ENCODE measurements at regions of chr10 and their contacts with region 1.

Region 1: DNA sequence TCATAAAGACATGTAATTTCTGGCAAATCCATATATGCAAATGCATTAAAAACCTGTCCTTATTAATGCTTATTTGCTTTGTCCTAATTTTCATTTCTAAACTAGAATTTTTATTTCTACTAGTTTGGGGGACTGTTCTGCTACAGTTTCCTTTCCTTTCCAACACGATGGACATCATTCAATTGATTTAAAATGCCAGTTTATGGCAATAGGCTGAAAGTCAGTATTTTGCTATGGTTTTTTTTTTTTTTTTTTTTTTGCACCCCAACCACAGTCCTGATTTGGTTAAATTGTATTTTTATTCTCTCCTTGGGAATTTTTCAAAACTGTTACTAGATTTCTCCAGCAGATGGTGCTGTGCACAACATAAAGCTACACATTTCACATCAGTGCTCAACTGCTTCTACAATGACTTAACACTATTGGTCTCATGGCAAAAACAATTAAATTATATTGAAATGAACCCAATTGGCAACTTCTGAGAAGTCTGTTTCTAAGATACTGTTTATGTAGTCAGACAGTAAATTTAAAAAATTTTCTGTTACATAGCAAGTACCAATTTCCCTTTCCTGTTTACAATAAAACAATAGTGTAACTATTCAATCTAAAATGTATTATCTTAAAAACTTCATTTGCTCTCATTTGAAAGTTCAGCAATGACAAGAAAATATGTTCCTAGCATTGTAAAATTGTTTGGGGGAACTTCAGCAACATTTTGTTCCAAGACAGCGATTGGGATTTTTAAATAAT is 193.8 kb upstream of the CCDC6 start:
- DNase-seq: peak in 1 of 2 experiments; percentile 73
- H3K4me3 ChIP-seq: no peak overlapping the region
- H3K4me3 Mint-ChIP-seq: no peak overlapping the region
- H3K27ac Mint-ChIP-seq: no peak overlapping the region
- H3K4me1 ChIP-seq: peaks cover 7% of the 10 kb centered on the region; the same call in 1 of the 2 replicates
- H3K4me1 Mint-ChIP-seq: peaks cover 10% of the 10 kb centered on the region
- H3K27me3 ChIP-seq: no peaks in the 10 kb centered on the region
- H3K27me3 Mint-ChIP-seq: no peaks in the 10 kb centered on the region
- CTCF ChIP-seq: peak; percentile 78 to 81

Region 2: GRCh38 chr10:59337201-59337652 is 762.9 kb before region 1 on chr10:
- CTCF ChIA-PET with region 1: interaction called, 11 read pairs
- POLR2A ChIA-PET with region 1: no interaction called
- intact Hi-C with region 1: no loop called
- DNase-seq: no peak
- H3K4me3 ChIP-seq: no peak overlapping the region
- H3K4me3 Mint-ChIP-seq: no peak overlapping the region
- H3K27ac Mint-ChIP-seq: no peak overlapping the region
- H3K4me1 ChIP-seq: no peaks in the 10 kb centered on the region
- H3K4me1 Mint-ChIP-seq: no peaks in the 10 kb centered on the region
- H3K27me3 ChIP-seq: peaks cover 1% of the 10 kb centered on the region
- H3K27me3 Mint-ChIP-seq: peaks cover 20% of the 10 kb centered on the region
- CTCF ChIP-seq: no peak

Region 3: DNA sequence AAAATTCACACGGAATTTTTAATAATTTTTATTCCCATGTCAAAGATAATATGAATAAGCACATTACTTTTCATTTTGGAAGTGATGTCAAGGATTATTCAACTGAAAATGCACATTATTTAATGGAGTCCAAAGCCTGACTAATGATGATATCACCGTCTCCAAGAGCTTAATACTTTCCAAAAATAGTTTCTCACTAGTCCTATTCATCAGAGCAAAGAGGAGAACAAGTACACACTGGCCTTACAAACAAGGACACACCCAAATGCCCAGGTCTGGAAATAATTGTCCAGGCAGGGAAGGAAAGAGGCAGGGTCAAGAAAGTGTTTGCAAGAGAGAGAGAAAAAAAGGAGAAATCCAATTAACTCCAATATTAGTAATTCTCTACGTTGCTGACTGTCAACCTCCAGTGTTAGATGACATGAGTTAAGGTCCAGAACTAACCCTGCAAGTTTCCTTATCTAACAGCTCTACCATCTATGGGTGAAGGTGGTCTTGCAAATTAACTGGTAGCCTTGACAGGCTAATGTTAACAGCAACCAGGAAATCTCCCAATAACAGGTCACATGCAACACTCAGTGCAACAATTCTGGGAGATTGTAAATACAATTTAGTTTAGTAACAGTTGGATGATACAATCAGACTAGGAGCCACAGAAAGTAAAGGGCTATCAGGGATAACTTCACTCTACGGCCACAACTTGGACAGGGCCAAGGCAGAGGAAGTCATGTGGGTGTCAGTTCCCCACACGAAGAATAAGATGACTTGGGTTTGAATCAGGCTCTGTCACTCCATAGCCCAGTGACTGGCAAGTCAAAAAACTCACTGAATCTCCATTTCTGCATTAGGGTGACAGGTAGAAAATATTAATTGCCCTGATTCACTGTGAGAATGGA is 23.2 kb after region 1 on chr10:
- CTCF ChIA-PET with region 1: interaction called, 11 read pairs
- POLR2A ChIA-PET with region 1: no interaction called
- intact Hi-C with region 1: no loop called
- DNase-seq: no peak
- H3K4me3 ChIP-seq: no peak overlapping the region
- H3K4me3 Mint-ChIP-seq: no peak overlapping the region
- H3K27ac Mint-ChIP-seq: peak overlapping the region; percentile 50
- H3K4me1 ChIP-seq: peaks cover 15% of the 10 kb centered on the region
- H3K4me1 Mint-ChIP-seq: peaks cover 18% of the 10 kb centered on the region
- H3K27me3 ChIP-seq: no peaks in the 10 kb centered on the region
- H3K27me3 Mint-ChIP-seq: no peaks in the 10 kb centered on the region
- CTCF ChIP-seq: no peak

Region 4: GRCh38 chr10:60162631-60163030 is 62.5 kb after region 1 on chr10:
- CTCF ChIA-PET with region 1: no interaction called
- POLR2A ChIA-PET with region 1: no interaction called
- intact Hi-C with region 1: no loop called
- DNase-seq: no peak
- H3K4me3 ChIP-seq: no peak overlapping the region
- H3K4me3 Mint-ChIP-seq: no peak overlapping the region
- H3K27ac Mint-ChIP-seq: no peak overlapping the region
- H3K4me1 ChIP-seq: no peaks in the 10 kb centered on the region
- H3K4me1 Mint-ChIP-seq: no peaks in the 10 kb centered on the region
- H3K27me3 ChIP-seq: no peaks in the 10 kb centered on the region
- H3K27me3 Mint-ChIP-seq: peaks cover 3% of the 10 kb centered on the region
- CTCF ChIP-seq: no peak

Region 5: GRCh38 chr10:60175441-60175971 is 75.3 kb after region 1 on chr10:
- CTCF ChIA-PET with region 1: interaction called, 11 read pairs
- POLR2A ChIA-PET with region 1: no interaction called
- intact Hi-C with region 1: no loop called
- DNase-seq: peak; percentile 69 to 82
- H3K4me3 ChIP-seq: no peak overlapping the region
- H3K4me3 Mint-ChIP-seq: peak overlapping the region; percentile 2
- H3K27ac Mint-ChIP-seq: peak overlapping the region; percentile 54
- H3K4me1 ChIP-seq: peaks cover 65% of the 10 kb centered on the region
- H3K4me1 Mint-ChIP-seq: peaks cover 51% of the 10 kb centered on the region
- H3K27me3 ChIP-seq: no peaks in the 10 kb centered on the region
- H3K27me3 Mint-ChIP-seq: no peaks in the 10 kb centered on the region
- CTCF ChIP-seq: no peak

Region 6: DNA sequence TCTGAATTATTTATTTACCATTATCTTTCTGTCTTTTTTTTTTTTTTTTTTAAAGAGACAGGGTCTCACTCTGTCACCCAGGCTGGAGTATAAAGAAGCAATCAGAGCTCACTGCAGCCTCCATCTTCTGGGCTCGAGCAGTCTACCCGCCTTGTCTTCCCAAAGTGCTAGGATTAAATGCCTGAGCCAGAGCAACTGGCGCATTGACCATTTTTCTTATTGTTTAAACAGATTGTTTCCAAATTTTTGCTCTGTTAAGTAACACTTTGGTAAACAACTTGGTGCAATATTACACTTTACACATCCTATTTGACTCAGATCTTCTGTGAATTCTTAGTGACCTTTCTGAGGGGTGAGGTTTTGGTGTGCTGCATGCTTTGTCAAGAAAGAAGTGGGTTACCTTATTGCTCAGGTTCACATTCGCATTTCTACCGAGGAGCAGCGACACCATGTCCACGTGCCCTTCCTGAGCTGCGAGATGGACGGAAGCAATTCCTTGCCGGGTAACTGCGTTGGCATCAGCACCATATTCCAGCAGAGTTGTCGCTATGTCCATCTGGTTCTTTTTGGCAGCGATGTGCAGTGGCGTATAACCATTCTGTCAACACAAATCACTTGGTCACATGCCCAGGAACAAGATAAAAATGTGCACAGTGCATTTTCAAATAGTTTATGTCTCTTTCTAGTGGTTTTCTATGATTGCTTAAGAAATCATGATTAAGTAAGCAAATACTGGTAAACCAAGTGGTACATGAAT is 86.3 kb after region 1 on chr10:
- CTCF ChIA-PET with region 1: no interaction called
- POLR2A ChIA-PET with region 1: no interaction called
- intact Hi-C with region 1: no loop called
- DNase-seq: no peak
- H3K4me3 ChIP-seq: no peak overlapping the region
- H3K4me3 Mint-ChIP-seq: no peak overlapping the region
- H3K27ac Mint-ChIP-seq: no peak overlapping the region
- H3K4me1 ChIP-seq: no peaks in the 10 kb centered on the region
- H3K4me1 Mint-ChIP-seq: peaks cover 7% of the 10 kb centered on the region
- H3K27me3 ChIP-seq: no peaks in the 10 kb centered on the region
- H3K27me3 Mint-ChIP-seq: no peaks in the 10 kb centered on the region
- CTCF ChIP-seq: no peak

Region 7: GRCh38 chr10:60335708-60336107 is 235.5 kb after region 1 on chr10:
- CTCF ChIA-PET with region 1: interaction called, 3 read pairs
- POLR2A ChIA-PET with region 1: no interaction called
- intact Hi-C with region 1: loop called (anchors 10 kb)
- DNase-seq: peak in 1 of 2 experiments; percentile 40
- H3K4me3 ChIP-seq: no peak overlapping the region
- H3K4me3 Mint-ChIP-seq: no peak overlapping the region
- H3K27ac Mint-ChIP-seq: no peak overlapping the region
- H3K4me1 ChIP-seq: 0 out of 2 replicates have a peak, but pooled peaks cover 5% of the 10 kb centered on the region
- H3K4me1 Mint-ChIP-seq: peaks cover 16% of the 10 kb centered on the region
- H3K27me3 ChIP-seq: no peaks in the 10 kb centered on the region
- H3K27me3 Mint-ChIP-seq: no peaks in the 10 kb centered on the region
- CTCF ChIP-seq: peak; percentile 62 to 70

Region 8: GRCh38 chr10:60646966-60647796 is 547.0 kb after region 1 on chr10:
- CTCF ChIA-PET with region 1: interaction called, 10 read pairs
- POLR2A ChIA-PET with region 1: no interaction called
- intact Hi-C with region 1: loop called (anchors 5 kb)
- DNase-seq: peak; percentile 52 to 77
- H3K4me3 ChIP-seq: no peak overlapping the region
- H3K4me3 Mint-ChIP-seq: no peak overlapping the region
- H3K27ac Mint-ChIP-seq: no peak overlapping the region
- H3K4me1 ChIP-seq: peaks cover 39% of the 10 kb centered on the region
- H3K4me1 Mint-ChIP-seq: peaks cover 35% of the 10 kb centered on the region
- H3K27me3 ChIP-seq: no peaks in the 10 kb centered on the region
- H3K27me3 Mint-ChIP-seq: no peaks in the 10 kb centered on the region
- CTCF ChIP-seq: peak; percentile 82 to 97

Measured in Caco-2 (cell line).